Activated CD8-positive, alpha-beta T cell treated with anti-CD3 and anti-CD28 coated beads for 36 hours (primary cell): ENCODE measurements at regions of chr18 and their contacts with region 1.

Region 1: GRCh38 chr18:26926066-26926675 is 60.7 kb upstream of the AQP4 start:
- DNase-seq: no peak
- ATAC-seq: no peak
- H3K4me3 Mint-ChIP-seq: no peak overlapping the region
- H3K27ac Mint-ChIP-seq: no peak overlapping the region
- H3K4me1 Mint-ChIP-seq: no peaks in the 10 kb centered on the region
- H3K27me3 Mint-ChIP-seq: peaks cover 2% of the 10 kb centered on the region
- CTCF ChIP-seq: no peak

Region 2: GRCh38 chr18:26875040-26875654 is 51.0 kb before region 1 on chr18:
- CTCF ChIA-PET with region 1: no interaction called
- POLR2A ChIA-PET with region 1: no interaction called
- intact Hi-C with region 1: loop called (anchors 5 kb)
- DNase-seq: no peak
- ATAC-seq: no peak
- H3K4me3 Mint-ChIP-seq: no peak overlapping the region
- H3K27ac Mint-ChIP-seq: no peak overlapping the region
- H3K4me1 Mint-ChIP-seq: no peaks in the 10 kb centered on the region
- H3K27me3 Mint-ChIP-seq: no peaks in the 10 kb centered on the region
- CTCF ChIP-seq: no peak

Region 3: DNA sequence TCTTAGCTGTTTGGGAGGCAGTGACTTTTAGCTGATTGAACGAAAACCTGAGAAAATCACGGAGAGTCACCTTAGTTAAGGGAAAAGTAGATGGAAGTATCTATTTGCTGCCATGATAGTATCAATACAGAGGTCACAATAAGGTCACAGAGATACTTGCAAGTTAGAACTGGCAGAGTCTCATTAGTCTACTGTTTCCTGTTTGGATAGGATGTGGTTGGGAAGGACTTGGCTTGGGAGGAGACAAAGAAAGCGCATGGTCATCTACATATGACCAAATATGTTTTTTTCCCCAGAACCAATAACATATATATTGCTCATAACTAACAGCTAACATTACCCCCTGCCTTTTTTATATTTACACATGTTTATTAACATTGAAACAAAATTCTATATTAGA is 17.7 kb after region 1 on chr18:
- CTCF ChIA-PET with region 1: no interaction called
- POLR2A ChIA-PET with region 1: no interaction called
- intact Hi-C with region 1: no loop called
- DNase-seq: no peak
- ATAC-seq: no peak
- H3K4me3 Mint-ChIP-seq: no peak overlapping the region
- H3K27ac Mint-ChIP-seq: no peak overlapping the region
- H3K4me1 Mint-ChIP-seq: no peaks in the 10 kb centered on the region
- H3K27me3 Mint-ChIP-seq: no peaks in the 10 kb centered on the region
- CTCF ChIP-seq: no peak

Region 4: DNA sequence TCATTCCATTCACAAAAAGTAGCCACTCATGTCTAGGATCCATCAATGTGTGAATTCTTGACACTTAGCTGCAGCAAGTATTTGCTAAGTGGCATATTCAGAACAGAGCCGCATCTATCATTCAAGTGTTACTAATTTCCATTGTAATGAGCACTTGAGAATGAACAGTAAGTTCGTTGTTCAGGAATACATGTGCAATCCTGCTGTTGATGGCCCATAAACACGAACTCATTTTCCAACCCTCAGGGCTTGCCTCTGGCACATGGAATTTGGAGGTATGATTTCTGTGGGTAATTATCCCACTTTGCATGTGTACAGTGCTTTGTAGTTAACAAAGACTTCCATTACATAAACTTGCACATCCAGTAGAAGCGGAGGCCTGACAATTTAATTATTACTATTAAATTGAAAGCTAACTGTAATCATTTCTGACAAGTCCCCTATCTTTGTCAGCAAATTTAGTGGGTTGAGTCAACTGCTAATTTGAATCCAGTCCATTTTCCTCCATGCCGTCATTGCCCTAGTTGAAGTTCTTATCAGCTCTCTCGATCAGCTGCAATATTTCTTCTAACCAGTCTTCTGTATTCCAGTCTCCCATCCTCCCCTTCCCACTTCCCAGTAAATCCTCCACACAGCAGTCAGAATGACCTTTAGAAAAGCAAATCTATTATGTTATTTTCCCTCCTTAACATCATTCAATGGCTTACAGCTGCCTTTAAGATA is 55.4 kb after region 1 on chr18:
- CTCF ChIA-PET with region 1: no interaction called
- POLR2A ChIA-PET with region 1: no interaction called
- intact Hi-C with region 1: no loop called
- DNase-seq: no peak
- ATAC-seq: no peak
- H3K4me3 Mint-ChIP-seq: no peak overlapping the region
- H3K27ac Mint-ChIP-seq: no peak overlapping the region
- H3K4me1 Mint-ChIP-seq: no peaks in the 10 kb centered on the region
- H3K27me3 Mint-ChIP-seq: no peaks in the 10 kb centered on the region
- CTCF ChIP-seq: no peak